CD8-positive, alpha-beta T cell (primary cell): ENCODE measurements at regions of chr19 and their contacts with region 1.

Region 1: GRCh38 chr19:29694669-29695627 is 20.1 kb downstream of the C19orf12 start:
- DNase-seq: peak; percentile 71 to 91 (median 83)
- ATAC-seq: peak; percentile 93
- H3K4me3 ChIP-seq: no peak overlapping the region
- H3K4me3 Mint-ChIP-seq: no peak overlapping the region
- H3K27ac ChIP-seq: no peak overlapping the region
- H3K27ac Mint-ChIP-seq: peak overlapping the region; percentile 39
- H3K4me1 ChIP-seq: peaks cover 26% of the 10 kb centered on the region
- H3K4me1 Mint-ChIP-seq: peaks cover 17% of the 10 kb centered on the region
- H3K27me3 ChIP-seq: no peaks in the 10 kb centered on the region
- H3K27me3 Mint-ChIP-seq: no peaks in the 10 kb centered on the region
- CTCF ChIP-seq: peak; percentile 97

Region 2: GRCh38 chr19:29467824-29468401 is 227.0 kb before region 1 on chr19:
- CTCF ChIA-PET with region 1: no interaction called
- POLR2A ChIA-PET with region 1: no interaction called
- intact Hi-C with region 1: loop called in 1 of 2 experiments (anchors 5 kb)
- DNase-seq: peak in 5 of 9 experiments; percentile 11 to 49 (median 36)
- ATAC-seq: no peak
- H3K4me3 ChIP-seq: no peak overlapping the region
- H3K4me3 Mint-ChIP-seq: no peak overlapping the region
- H3K27ac ChIP-seq: no peak overlapping the region
- H3K27ac Mint-ChIP-seq: no peak overlapping the region
- H3K4me1 ChIP-seq: no peaks in the 10 kb centered on the region
- H3K4me1 Mint-ChIP-seq: no peaks in the 10 kb centered on the region
- H3K27me3 ChIP-seq: no peaks in the 10 kb centered on the region
- H3K27me3 Mint-ChIP-seq: peaks cover 2% of the 10 kb centered on the region
- CTCF ChIP-seq: no peak

Region 3: DNA sequence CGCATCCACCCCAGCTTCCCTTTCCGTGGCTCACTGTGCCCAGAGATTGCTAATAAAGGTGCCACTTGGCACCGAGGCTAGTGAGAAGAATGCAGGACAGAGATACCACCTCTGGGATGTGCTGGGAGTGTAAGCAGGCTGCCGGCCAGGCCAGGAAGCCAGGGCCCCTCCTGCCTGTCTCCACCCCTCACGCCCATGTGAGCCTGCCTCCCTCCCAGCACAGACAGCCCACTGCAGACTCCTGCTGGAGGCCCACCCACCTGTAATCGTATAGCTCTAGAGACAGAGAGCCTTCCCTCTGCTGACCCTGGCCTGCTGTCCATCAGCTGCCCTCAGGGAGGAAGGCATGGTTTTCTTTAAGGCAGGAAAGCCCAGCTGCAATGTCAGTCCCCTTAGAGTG is 155.3 kb before region 1 on chr19:
- CTCF ChIA-PET with region 1: no interaction called
- POLR2A ChIA-PET with region 1: no interaction called
- intact Hi-C with region 1: no loop called
- DNase-seq: no peak
- ATAC-seq: no peak
- H3K4me3 ChIP-seq: no peak overlapping the region
- H3K4me3 Mint-ChIP-seq: no peak overlapping the region
- H3K27ac ChIP-seq: no peak overlapping the region
- H3K27ac Mint-ChIP-seq: no peak overlapping the region
- H3K4me1 ChIP-seq: no peaks in the 10 kb centered on the region
- H3K4me1 Mint-ChIP-seq: no peaks in the 10 kb centered on the region
- H3K27me3 ChIP-seq: peaks cover 3% of the 10 kb centered on the region in 2 experiments
- H3K27me3 Mint-ChIP-seq: peaks cover 22% of the 10 kb centered on the region
- CTCF ChIP-seq: no peak

Region 4: GRCh38 chr19:29665215-29665825 is 29.6 kb before region 1 on chr19 and contains the start of gene PLEKHF1:
- CTCF ChIA-PET with region 1: interaction called, 45 read pairs
- POLR2A ChIA-PET with region 1: interaction called, 5 read pairs
- intact Hi-C with region 1: loop called (anchors 1 to 2 kb)
- DNase-seq: peak; percentile 56 to 89 (median 81)
- ATAC-seq: peak; percentile 69
- H3K4me3 ChIP-seq: peak within 1 kb of the TSS; percentile 91 to 96
- H3K4me3 Mint-ChIP-seq: peak within 1 kb of the TSS; percentile 89
- H3K27ac ChIP-seq: peak within 1 kb of the TSS; percentile 69 to 84
- H3K27ac Mint-ChIP-seq: peak within 1 kb of the TSS; percentile 94
- H3K4me1 ChIP-seq: peaks cover 57% of the 10 kb centered on the region
- H3K4me1 Mint-ChIP-seq: peaks cover 60% of the 10 kb centered on the region
- H3K27me3 ChIP-seq: no peaks in the 10 kb centered on the region
- H3K27me3 Mint-ChIP-seq: no peaks in the 10 kb centered on the region
- CTCF ChIP-seq: no peak
- total RNA-seq, gene PLEKHF1: 33.7 to 34.1 TPM

Region 5: GRCh38 chr19:29671393-29672160 is 23.4 kb before region 1 on chr19:
- CTCF ChIA-PET with region 1: interaction called, 45 read pairs
- POLR2A ChIA-PET with region 1: interaction called, 5 read pairs
- intact Hi-C with region 1: loop called (anchors 2 kb)
- DNase-seq: peak; percentile 73 to 96 (median 91)
- ATAC-seq: peak; percentile 62
- H3K4me3 ChIP-seq: peak overlapping the region; percentile 16 to 26
- H3K4me3 Mint-ChIP-seq: peak overlapping the region; percentile 49
- H3K27ac ChIP-seq: peak overlapping the region; percentile 80 to 84
- H3K27ac Mint-ChIP-seq: peak overlapping the region; percentile 94
- H3K4me1 ChIP-seq: peaks cover 97% of the 10 kb centered on the region
- H3K4me1 Mint-ChIP-seq: peaks cover 90% of the 10 kb centered on the region
- H3K27me3 ChIP-seq: no peaks in the 10 kb centered on the region
- H3K27me3 Mint-ChIP-seq: no peaks in the 10 kb centered on the region
- CTCF ChIP-seq: peak; percentile 62

Region 6: GRCh38 chr19:29680447-29680846 is 14.5 kb before region 1 on chr19:
- CTCF ChIA-PET with region 1: interaction called, 14 read pairs
- POLR2A ChIA-PET with region 1: no interaction called
- intact Hi-C with region 1: no loop called
- DNase-seq: peak; percentile 67 to 94 (median 85)
- ATAC-seq: peak; percentile 83
- H3K4me3 ChIP-seq: peak overlapping the region; percentile 13 to 44
- H3K4me3 Mint-ChIP-seq: peak overlapping the region; percentile 71
- H3K27ac ChIP-seq: peak overlapping the region; percentile 26 to 71
- H3K27ac Mint-ChIP-seq: peak overlapping the region; percentile 86
- H3K4me1 ChIP-seq: peaks cover 74% of the 10 kb centered on the region
- H3K4me1 Mint-ChIP-seq: peaks cover 76% of the 10 kb centered on the region
- H3K27me3 ChIP-seq: no peaks in the 10 kb centered on the region
- H3K27me3 Mint-ChIP-seq: no peaks in the 10 kb centered on the region
- CTCF ChIP-seq: no peak

Region 7: GRCh38 chr19:29735800-29736199 is 40.9 kb after region 1 on chr19:
- CTCF ChIA-PET with region 1: interaction called, 12 read pairs
- POLR2A ChIA-PET with region 1: no interaction called
- intact Hi-C with region 1: no loop called
- DNase-seq: no peak
- ATAC-seq: no peak
- H3K4me3 ChIP-seq: no peak overlapping the region
- H3K4me3 Mint-ChIP-seq: no peak overlapping the region
- H3K27ac ChIP-seq: no peak overlapping the region
- H3K27ac Mint-ChIP-seq: no peak overlapping the region
- H3K4me1 ChIP-seq: no peaks in the 10 kb centered on the region
- H3K4me1 Mint-ChIP-seq: no peaks in the 10 kb centered on the region
- H3K27me3 ChIP-seq: no peaks in the 10 kb centered on the region
- H3K27me3 Mint-ChIP-seq: peaks cover 4% of the 10 kb centered on the region
- CTCF ChIP-seq: no peak